SK-N-SH (cell line): ENCODE measurements at regions of chr2 and their contacts with region 1.

Region 1: GRCh38 chr2:45778720-45779171 is 127.3 kb downstream of the PRKCE start:
- DNase-seq: peak; percentile 86
- H3K4me3 ChIP-seq: no peak overlapping the region
- H3K27ac ChIP-seq: no peak overlapping the region
- H3K4me1 ChIP-seq: peaks cover 0 to 23% of the 10 kb centered on the region in 2 experiments; a peak in 1 of 4 replicates
- H3K27me3 ChIP-seq: no peaks in the 10 kb centered on the region
- CTCF ChIP-seq: peak; percentile 92
- EP300 ChIP-seq: no peak
- RAD21 ChIP-seq: peak; percentile 87

Region 2: GRCh38 chr2:45256867-45257641 is 521.7 kb before region 1 on chr2:
- CTCF ChIA-PET with region 1: no interaction called
- POLR2A ChIA-PET with region 1: no interaction called
- DNase-seq: no peak
- H3K4me3 ChIP-seq: no peak overlapping the region
- H3K27ac ChIP-seq: no peak overlapping the region
- H3K4me1 ChIP-seq: peaks cover 0 to 32% of the 10 kb centered on the region in 2 experiments; a peak in 2 of 4 replicates
- H3K27me3 ChIP-seq: no peaks in the 10 kb centered on the region
- CTCF ChIP-seq: no peak
- EP300 ChIP-seq: no peak
- RAD21 ChIP-seq: no peak

Region 3: GRCh38 chr2:45643543-45644542 is 134.9 kb before region 1 on chr2:
- CTCF ChIA-PET with region 1: interaction called, 45 read pairs
- POLR2A ChIA-PET with region 1: no interaction called
- DNase-seq: peak; percentile 98
- H3K4me3 ChIP-seq: peak overlapping the region; percentile 70 to 75
- H3K27ac ChIP-seq: no peak overlapping the region
- H3K4me1 ChIP-seq: peaks cover 0 to 10% of the 10 kb centered on the region in 2 experiments; a peak in 1 of 4 replicates
- H3K27me3 ChIP-seq: peaks cover 12% of the 10 kb centered on the region; the same call in 1 of the 2 replicates
- CTCF ChIP-seq: peak; percentile 92
- EP300 ChIP-seq: no peak
- RAD21 ChIP-seq: peak; percentile 99

Region 4: DNA sequence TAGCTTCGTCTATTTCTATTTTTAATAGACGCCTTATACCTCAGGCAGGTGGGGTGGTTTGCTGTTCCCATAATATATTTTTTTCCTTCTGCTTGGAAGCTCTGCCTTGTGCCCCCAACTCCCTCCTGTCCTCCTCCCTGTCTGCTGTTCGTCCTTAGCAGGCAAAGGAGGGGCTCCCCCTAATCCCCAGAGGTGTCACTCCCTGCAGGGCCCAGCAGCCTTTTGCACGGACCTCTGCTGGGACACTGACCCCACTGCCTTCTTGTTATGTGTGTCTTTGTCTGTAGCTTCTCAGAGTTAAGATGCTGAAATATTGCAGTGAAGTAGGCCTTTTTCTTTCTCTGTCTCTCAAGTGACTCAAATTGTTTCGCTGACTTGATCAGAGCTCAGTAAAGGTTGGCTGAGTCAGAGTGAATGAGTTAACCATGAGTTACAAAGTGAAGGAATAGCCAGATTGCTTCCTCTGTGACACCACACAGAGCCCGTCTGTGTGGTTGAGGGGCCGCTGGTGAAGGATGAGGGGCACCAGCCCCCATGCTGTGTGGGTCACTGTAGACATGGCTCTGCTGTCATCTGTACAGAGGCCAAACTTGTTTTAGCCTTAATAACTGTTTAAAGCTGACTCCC is 79.6 kb before region 1 on chr2:
- CTCF ChIA-PET with region 1: interaction called, 11 read pairs
- POLR2A ChIA-PET with region 1: no interaction called
- DNase-seq: no peak
- H3K4me3 ChIP-seq: no peak overlapping the region
- H3K27ac ChIP-seq: peak overlapping the region; percentile 66 to 69; a peak in 3 of 4 replicates
- H3K4me1 ChIP-seq: peaks cover 17 to 35% of the 10 kb centered on the region in 2 experiments
- H3K27me3 ChIP-seq: no peaks in the 10 kb centered on the region
- CTCF ChIP-seq: no peak
- EP300 ChIP-seq: peak in 1 of 2 experiments; percentile 49; a peak in 2 of 4 replicates
- RAD21 ChIP-seq: no peak

Region 5: DNA sequence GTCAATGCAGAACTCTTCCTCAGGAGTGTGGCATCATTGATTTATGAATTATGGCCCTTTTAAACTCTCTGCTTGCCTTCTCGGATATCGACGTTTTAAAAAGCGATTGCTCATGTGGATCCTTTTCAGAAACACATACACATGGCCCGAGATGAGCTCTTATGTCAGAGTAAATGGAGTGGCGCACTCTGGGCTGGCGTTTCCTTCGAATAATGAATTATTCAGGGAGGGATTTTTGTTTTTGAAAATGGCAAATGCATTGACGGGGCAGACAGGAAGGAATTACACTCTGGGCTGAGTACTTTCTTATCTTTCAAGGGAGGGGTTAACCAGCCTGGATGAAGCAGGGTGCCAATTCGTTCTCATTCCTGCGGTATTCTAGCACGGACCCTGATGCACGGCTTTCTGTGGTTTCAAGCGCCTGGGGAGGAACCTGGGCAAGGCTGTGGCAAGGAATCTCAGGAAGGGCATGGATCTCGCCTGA is 15.4 kb after region 1 on chr2:
- CTCF ChIA-PET with region 1: interaction called, 22 read pairs
- POLR2A ChIA-PET with region 1: no interaction called
- DNase-seq: no peak
- H3K4me3 ChIP-seq: no peak overlapping the region
- H3K27ac ChIP-seq: no peak overlapping the region
- H3K4me1 ChIP-seq: peaks cover 0 to 18% of the 10 kb centered on the region in 2 experiments; a peak in 1 of 4 replicates
- H3K27me3 ChIP-seq: no peaks in the 10 kb centered on the region
- CTCF ChIP-seq: no peak
- EP300 ChIP-seq: no peak
- RAD21 ChIP-seq: no peak

Region 6: DNA sequence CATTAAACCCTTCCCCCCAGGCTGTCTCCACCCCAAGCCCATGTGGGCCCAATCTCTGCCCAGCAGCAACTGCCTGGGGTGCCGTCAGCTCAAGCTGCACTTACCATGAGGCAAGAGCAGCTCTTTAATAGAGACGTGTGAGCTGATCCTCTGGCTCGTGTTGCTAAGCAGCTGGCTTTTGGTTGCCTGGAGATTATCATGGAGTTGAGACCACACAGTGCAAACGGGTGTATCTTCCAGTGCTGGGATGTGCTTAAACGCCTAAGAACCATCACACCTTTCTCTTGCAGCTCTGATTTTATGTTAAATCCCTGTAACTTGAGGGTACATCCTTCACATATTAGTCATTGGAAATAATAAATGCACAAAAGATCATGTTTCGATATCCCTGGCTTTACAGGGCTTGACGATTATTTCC is 143.8 kb after region 1 on chr2:
- CTCF ChIA-PET with region 1: interaction called, 13 read pairs
- POLR2A ChIA-PET with region 1: no interaction called
- DNase-seq: peak; percentile 89
- H3K4me3 ChIP-seq: no peak overlapping the region
- H3K27ac ChIP-seq: peak overlapping the region in 1 of 2 experiments; percentile 74; a peak in 2 of 4 replicates
- H3K4me1 ChIP-seq: peaks cover 5 to 53% of the 10 kb centered on the region in 2 experiments; a peak in 2 of 4 replicates
- H3K27me3 ChIP-seq: no peaks in the 10 kb centered on the region
- CTCF ChIP-seq: no peak
- EP300 ChIP-seq: 0 out of 4 replicates have a peak, but pooled peaks of 1 of the 2 experiments have one; percentile 23
- RAD21 ChIP-seq: 0 out of 2 replicates have a peak, but pooled peaks have one; percentile 7